Activated naive CD4-positive, alpha-beta T cell treated with anti-CD3 and anti-CD28 coated beads for 36 hours (primary cell): ENCODE measurements at regions of chr6 and their contacts with region 1.

Region 1: DNA sequence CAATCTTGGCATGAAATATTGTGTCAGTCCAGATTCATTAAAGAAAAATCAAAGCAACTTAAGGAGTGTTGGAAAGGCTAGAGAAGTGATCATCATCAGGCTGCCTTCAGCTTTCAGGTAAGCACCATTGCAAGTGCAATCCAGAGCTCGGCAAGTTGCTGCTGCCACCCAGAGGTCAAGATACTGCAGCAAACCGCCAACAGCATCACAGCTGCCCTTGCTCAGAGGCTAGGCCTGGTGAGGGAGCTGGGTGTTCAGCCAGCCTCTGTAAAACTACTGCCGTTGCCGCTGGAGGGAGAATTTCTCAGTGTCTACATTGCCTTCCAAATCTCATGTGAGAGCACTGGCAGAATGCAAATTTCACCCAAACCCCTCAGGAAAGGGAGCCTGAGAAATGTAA is 5.8 kb upstream of the SYNE1 start:
- DNase-seq: peak; percentile 56
- H3K4me3 Mint-ChIP-seq: no peak overlapping the region
- H3K27ac Mint-ChIP-seq: no peak overlapping the region
- H3K4me1 Mint-ChIP-seq: no peaks in the 10 kb centered on the region
- H3K27me3 Mint-ChIP-seq: peaks cover 13% of the 10 kb centered on the region

Region 2: GRCh38 chr6:152484806-152485205 is 158.2 kb before region 1 on chr6:
- CTCF ChIA-PET with region 1: interaction called, 3 read pairs
- intact Hi-C with region 1: loop called (anchors 1 kb)
- DNase-seq: no peak
- H3K4me3 Mint-ChIP-seq: no peak overlapping the region
- H3K27ac Mint-ChIP-seq: no peak overlapping the region
- H3K4me1 Mint-ChIP-seq: no peaks in the 10 kb centered on the region
- H3K27me3 Mint-ChIP-seq: peaks cover 7% of the 10 kb centered on the region

Region 3: DNA sequence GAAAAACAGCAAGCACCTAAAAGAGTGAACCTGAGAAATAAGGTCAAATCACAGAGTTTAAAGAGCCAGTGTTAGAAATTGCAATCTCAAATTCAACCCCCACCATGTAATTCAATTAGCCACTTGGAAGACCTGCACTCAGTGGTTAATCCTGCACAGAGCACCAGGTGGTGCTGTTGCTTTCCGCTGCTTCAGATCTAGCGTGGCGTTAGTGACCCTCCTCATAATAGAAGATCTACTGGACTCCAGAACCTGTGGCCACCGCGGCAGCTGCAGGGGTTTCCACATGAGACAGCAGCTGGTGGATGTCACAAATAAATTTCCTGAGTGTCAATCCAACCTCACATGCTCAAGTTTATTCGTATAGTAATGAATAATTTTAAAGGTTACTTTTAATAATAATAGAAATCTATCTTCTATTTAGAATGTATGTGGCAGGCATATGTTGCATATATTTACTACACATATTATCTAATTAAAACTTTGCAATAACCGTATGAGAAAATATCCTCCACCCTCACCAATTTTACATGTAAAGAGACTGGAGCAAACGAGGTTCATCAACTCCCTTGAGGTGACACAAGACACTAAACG is 90.3 kb before region 1 on chr6:
- CTCF ChIA-PET with region 1: interaction called, 5 read pairs
- intact Hi-C with region 1: loop called (anchors 1 kb)
- DNase-seq: peak; percentile 37
- H3K4me3 Mint-ChIP-seq: no peak overlapping the region
- H3K27ac Mint-ChIP-seq: no peak overlapping the region
- H3K4me1 Mint-ChIP-seq: no peaks in the 10 kb centered on the region
- H3K27me3 Mint-ChIP-seq: peaks cover 22% of the 10 kb centered on the region